CD4-positive, alpha-beta T cell (primary cell): ENCODE measurements at regions of chr10 and their contacts with region 1.

Region 1: GRCh38 chr10:97676770-97677581 is 10.1 kb downstream of the AVPI1 start:
- DNase-seq: peak; percentile 19 to 82 (median 44)
- ATAC-seq: peak; percentile 94
- H3K4me3 ChIP-seq: no peak overlapping the region
- H3K4me3 Mint-ChIP-seq: no peak overlapping the region
- H3K27ac ChIP-seq: no peak overlapping the region
- H3K27ac Mint-ChIP-seq: no peak overlapping the region
- H3K4me1 ChIP-seq: peaks cover 5% of the 10 kb centered on the region
- H3K4me1 Mint-ChIP-seq: no peaks in the 10 kb centered on the region
- H3K27me3 ChIP-seq: no peaks in the 10 kb centered on the region
- H3K27me3 Mint-ChIP-seq: no peaks in the 10 kb centered on the region
- CTCF ChIP-seq: peak; percentile 91

Region 2: GRCh38 chr10:97701438-97702069 is 24.6 kb after region 1 on chr10:
- CTCF ChIA-PET with region 1: interaction called, 13 read pairs
- POLR2A ChIA-PET with region 1: no interaction called
- intact Hi-C with region 1: loop called in 1 of 2 experiments (anchors 2 kb)
- DNase-seq: peak in 10 of 14 experiments; percentile 14 to 81 (median 32)
- ATAC-seq: peak; percentile 98
- H3K4me3 ChIP-seq: no peak overlapping the region
- H3K4me3 Mint-ChIP-seq: no peak overlapping the region
- H3K27ac ChIP-seq: no peak overlapping the region
- H3K27ac Mint-ChIP-seq: no peak overlapping the region
- H3K4me1 ChIP-seq: peaks cover 5% of the 10 kb centered on the region
- H3K4me1 Mint-ChIP-seq: no peaks in the 10 kb centered on the region
- H3K27me3 ChIP-seq: peaks cover 0 to 7% of the 10 kb centered on the region in 2 experiments
- H3K27me3 Mint-ChIP-seq: peaks cover 30% of the 10 kb centered on the region
- CTCF ChIP-seq: peak; percentile 70

Region 3: DNA sequence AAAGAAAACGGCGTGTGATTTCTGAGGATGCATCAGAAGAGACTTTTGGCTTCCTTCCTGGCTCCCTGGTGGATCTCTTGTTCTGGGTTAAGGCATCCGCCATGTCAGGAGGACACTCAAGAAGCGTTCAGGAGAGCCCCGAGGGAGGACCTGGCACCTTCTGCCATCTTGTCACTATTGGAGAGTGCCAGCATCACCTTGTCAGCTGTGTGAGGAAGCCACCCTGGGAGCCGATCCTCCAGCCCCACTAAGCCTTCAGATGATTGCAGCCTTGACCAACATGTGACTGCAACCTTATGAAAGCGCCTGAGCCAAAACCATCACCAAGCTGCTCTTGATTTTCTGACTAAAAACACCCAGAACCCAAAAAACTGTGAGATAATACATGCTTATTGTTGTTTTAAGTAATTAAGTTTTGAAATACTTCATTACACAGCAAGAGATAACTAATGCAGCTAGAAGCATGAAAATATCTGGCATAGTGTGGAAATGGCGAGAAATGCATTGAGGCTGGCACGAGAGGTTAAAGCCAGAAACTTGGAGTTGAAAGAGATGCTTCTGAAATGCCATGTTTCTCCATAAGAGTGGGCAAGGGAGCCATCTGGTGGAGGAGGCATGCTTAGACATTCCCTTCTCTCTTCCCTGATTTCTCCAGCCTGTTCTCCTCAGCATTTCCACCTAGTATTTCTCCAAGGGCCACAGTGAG is 54.5 kb after region 1 on chr10:
- CTCF ChIA-PET with region 1: interaction called, 15 read pairs
- POLR2A ChIA-PET with region 1: interaction called, 5 read pairs
- intact Hi-C with region 1: loop called (anchors 1 kb)
- DNase-seq: peak; percentile 27 to 82 (median 48)
- ATAC-seq: peak; percentile 75
- H3K4me3 ChIP-seq: no peak overlapping the region
- H3K4me3 Mint-ChIP-seq: no peak overlapping the region
- H3K27ac ChIP-seq: no peak overlapping the region
- H3K27ac Mint-ChIP-seq: no peak overlapping the region
- H3K4me1 ChIP-seq: peaks cover 8% of the 10 kb centered on the region
- H3K4me1 Mint-ChIP-seq: peaks cover 12% of the 10 kb centered on the region
- H3K27me3 ChIP-seq: no peaks in the 10 kb centered on the region
- H3K27me3 Mint-ChIP-seq: peaks cover 8% of the 10 kb centered on the region
- CTCF ChIP-seq: peak; percentile 83

Region 4: DNA sequence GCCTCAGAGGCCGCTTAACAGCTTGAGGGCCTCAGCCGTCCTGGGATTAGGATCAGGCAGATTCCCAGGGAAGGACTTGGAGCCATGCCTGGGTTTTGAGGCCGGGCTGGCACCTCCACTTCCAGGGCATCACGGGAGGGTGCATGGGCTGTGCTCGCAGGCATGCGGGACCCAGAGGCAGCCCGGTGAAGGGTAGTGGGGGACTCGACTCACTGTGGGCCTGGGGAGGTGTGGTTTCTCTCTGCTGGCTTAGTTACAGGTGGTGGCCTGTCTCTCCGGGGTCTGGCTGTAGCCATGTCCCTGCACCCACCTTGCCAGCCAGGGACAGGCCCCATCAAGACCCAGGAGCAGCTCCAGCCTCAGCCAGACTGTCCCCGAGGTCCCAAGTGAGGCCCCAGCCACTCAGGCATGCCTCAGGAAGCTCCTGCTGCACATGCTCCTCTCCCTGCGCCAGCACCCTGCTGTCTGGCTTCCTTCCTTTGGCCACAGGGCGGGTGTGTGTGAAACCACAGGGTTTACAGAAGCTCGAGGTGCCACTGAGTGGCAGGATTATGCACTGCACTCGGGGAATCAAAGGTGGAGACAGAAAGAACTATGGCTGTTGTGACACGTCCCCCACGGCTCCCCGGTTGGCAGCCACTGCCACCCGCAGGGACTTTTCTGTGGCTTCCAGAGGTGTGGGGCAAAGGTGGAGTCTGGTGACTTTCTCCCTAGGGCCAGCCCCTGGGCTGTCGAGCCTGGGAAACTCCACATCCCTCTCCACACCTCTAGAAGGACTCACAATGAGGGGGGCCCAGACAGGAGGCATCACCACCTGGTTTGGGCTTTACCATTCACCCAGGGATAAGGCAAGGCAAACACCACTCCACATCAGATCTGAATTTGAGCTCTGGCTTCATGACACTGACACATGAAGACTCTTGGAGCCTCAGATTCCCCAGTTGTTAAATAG is 192.4 kb after region 1 on chr10:
- CTCF ChIA-PET with region 1: no interaction called
- POLR2A ChIA-PET with region 1: no interaction called
- intact Hi-C with region 1: loop called (anchors 5 kb)
- DNase-seq: peak; percentile 70 to 93 (median 78)
- ATAC-seq: peak; percentile 100
- H3K4me3 ChIP-seq: no peak overlapping the region
- H3K4me3 Mint-ChIP-seq: no peak overlapping the region
- H3K27ac ChIP-seq: peak overlapping the region in 1 of 2 donors; percentile 4
- H3K27ac Mint-ChIP-seq: peak overlapping the region; percentile 66
- H3K4me1 ChIP-seq: peaks cover 14% of the 10 kb centered on the region
- H3K4me1 Mint-ChIP-seq: peaks cover 11% of the 10 kb centered on the region
- H3K27me3 ChIP-seq: no peaks in the 10 kb centered on the region
- H3K27me3 Mint-ChIP-seq: peaks cover 11% of the 10 kb centered on the region
- CTCF ChIP-seq: peak; percentile 86

Region 5: GRCh38 chr10:97974526-97975525 is 297.9 kb after region 1 on chr10:
- CTCF ChIA-PET with region 1: no interaction called
- POLR2A ChIA-PET with region 1: no interaction called
- intact Hi-C with region 1: no loop called
- DNase-seq: no peak
- ATAC-seq: no peak
- H3K4me3 ChIP-seq: no peak overlapping the region
- H3K4me3 Mint-ChIP-seq: no peak overlapping the region
- H3K27ac ChIP-seq: no peak overlapping the region
- H3K27ac Mint-ChIP-seq: no peak overlapping the region
- H3K4me1 ChIP-seq: no peaks in the 10 kb centered on the region
- H3K4me1 Mint-ChIP-seq: no peaks in the 10 kb centered on the region
- H3K27me3 ChIP-seq: peaks cover 28 to 65% of the 10 kb centered on the region in 2 experiments
- H3K27me3 Mint-ChIP-seq: peaks cover 83% of the 10 kb centered on the region
- CTCF ChIP-seq: no peak